T-cell (primary cell): ENCODE measurements at regions of chrX and their contacts with region 1.

Region 1: GRCh38 chrX:94560930-94561329 is 886.9 kb downstream of the FAM133A start:
- DNase-seq: no peak
- ATAC-seq: no peak
- H3K4me3 ChIP-seq: no peak overlapping the region
- H3K4me3 Mint-ChIP-seq: no peak overlapping the region
- H3K27ac ChIP-seq: no peak overlapping the region
- H3K27ac Mint-ChIP-seq: no peak overlapping the region
- H3K4me1 ChIP-seq: no peaks in the 10 kb centered on the region
- H3K4me1 Mint-ChIP-seq: no peaks in the 10 kb centered on the region
- H3K27me3 ChIP-seq: no peaks in the 10 kb centered on the region
- H3K27me3 Mint-ChIP-seq: no peaks in the 10 kb centered on the region

Region 2: GRCh38 chrX:94454159-94454558 is 106.8 kb before region 1 on chrX:
- CTCF ChIA-PET with region 1: no interaction called
- POLR2A ChIA-PET with region 1: no interaction called
- DNase-seq: no peak
- ATAC-seq: no peak
- H3K4me3 ChIP-seq: no peak overlapping the region
- H3K4me3 Mint-ChIP-seq: no peak overlapping the region
- H3K27ac ChIP-seq: no peak overlapping the region
- H3K27ac Mint-ChIP-seq: no peak overlapping the region
- H3K4me1 ChIP-seq: no peaks in the 10 kb centered on the region
- H3K4me1 Mint-ChIP-seq: no peaks in the 10 kb centered on the region
- H3K27me3 ChIP-seq: no peaks in the 10 kb centered on the region
- H3K27me3 Mint-ChIP-seq: peaks cover 0 to 6% of the 10 kb centered on the region in 2 donors

Region 3: DNA sequence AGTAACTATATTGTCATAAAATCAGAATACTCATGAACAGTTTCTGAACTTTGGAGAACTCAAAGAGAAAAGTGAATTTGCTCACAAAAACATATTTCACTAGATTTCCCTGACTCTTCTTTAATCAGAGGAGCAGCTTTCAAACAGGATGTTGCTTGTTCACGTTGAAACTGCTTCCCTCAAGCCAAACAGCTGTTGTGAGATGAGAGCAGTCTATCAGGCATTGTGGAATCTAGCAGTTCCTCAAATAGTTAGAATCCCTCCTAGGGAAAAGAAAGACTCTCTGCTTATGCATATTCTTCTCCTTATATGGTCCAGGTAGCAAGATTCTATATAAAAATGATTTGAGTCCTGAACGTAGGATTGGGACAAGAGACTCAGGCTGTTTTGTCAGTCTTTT is 125.1 kb after region 1 on chrX:
- CTCF ChIA-PET with region 1: no interaction called
- POLR2A ChIA-PET with region 1: interaction called in 1 of 2 experiments, 15 read pairs
- DNase-seq: no peak
- ATAC-seq: no peak
- H3K4me3 ChIP-seq: no peak overlapping the region
- H3K4me3 Mint-ChIP-seq: no peak overlapping the region
- H3K27ac ChIP-seq: no peak overlapping the region
- H3K27ac Mint-ChIP-seq: no peak overlapping the region
- H3K4me1 ChIP-seq: no peaks in the 10 kb centered on the region
- H3K4me1 Mint-ChIP-seq: no peaks in the 10 kb centered on the region
- H3K27me3 ChIP-seq: no peaks in the 10 kb centered on the region
- H3K27me3 Mint-ChIP-seq: no peaks in the 10 kb centered on the region